Activated B cell treated with CpG ODN at 0.5 μM for 24 hours (primary cell): ENCODE measurements at regions of chr9 and their contacts with region 1.

Region 1: DNA sequence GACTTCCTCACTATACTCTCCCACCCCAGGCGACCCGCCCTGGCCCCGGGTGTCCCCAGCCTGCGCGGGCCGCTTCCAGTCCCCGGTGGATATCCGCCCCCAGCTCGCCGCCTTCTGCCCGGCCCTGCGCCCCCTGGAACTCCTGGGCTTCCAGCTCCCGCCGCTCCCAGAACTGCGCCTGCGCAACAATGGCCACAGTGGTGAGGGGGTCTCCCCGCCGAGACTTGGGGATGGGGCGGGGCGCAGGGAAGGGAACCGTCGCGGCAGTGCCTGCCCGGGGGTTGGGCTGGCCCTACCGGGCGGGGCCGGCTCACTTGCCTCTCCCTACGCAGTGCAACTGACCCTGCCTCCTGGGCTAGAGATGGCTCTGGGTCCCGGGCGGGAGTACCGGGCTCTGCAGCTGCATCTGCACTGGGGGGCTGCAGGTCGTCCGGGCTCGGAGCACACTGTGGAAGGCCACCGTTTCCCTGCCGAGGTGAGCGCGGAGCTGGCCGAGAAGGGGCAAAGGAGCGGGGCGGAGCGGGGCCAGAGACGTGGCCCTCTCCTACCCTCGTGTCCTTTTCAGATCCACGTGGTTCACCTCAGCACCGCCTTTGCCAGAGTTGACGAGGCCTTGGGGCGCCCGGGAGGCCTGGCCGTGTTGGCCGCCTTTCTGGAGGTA is 2.1 kb downstream of the CA9 start:
- DNase-seq: peak; percentile 47
- ATAC-seq: peak; percentile 74
- H3K4me3 Mint-ChIP-seq: peak overlapping the region; percentile 75
- H3K27ac Mint-ChIP-seq: no peak overlapping the region
- H3K4me1 Mint-ChIP-seq: peaks cover 31% of the 10 kb centered on the region
- H3K27me3 Mint-ChIP-seq: peaks cover 8% of the 10 kb centered on the region
- CTCF ChIP-seq: no peak

Region 2: DNA sequence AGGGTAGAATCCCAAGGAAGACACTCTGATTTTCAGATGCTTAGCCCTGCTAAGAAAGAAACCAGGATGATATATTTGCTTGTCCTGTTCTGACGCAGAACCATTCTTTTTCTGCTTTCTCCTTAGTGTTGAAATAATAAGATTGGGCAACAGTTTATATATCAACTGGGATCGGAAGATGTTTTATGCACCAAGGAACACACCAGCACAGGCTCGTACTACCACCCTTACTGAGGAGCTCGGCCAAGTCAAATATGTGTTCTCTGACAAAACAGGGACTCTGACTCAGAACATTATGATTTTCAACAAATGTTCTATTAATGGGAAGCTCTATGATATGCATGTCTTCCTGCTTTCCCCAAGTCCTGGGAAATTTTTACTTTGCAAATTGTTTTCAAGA is 205.0 kb before region 1 on chr9:
- CTCF ChIA-PET with region 1: no interaction called
- POLR2A ChIA-PET with region 1: no interaction called
- intact Hi-C with region 1: no loop called
- DNase-seq: no peak
- ATAC-seq: no peak
- H3K4me3 Mint-ChIP-seq: no peak overlapping the region
- H3K27ac Mint-ChIP-seq: no peak overlapping the region
- H3K4me1 Mint-ChIP-seq: no peaks in the 10 kb centered on the region
- H3K27me3 Mint-ChIP-seq: peaks cover 22% of the 10 kb centered on the region
- CTCF ChIP-seq: no peak

Region 3: DNA sequence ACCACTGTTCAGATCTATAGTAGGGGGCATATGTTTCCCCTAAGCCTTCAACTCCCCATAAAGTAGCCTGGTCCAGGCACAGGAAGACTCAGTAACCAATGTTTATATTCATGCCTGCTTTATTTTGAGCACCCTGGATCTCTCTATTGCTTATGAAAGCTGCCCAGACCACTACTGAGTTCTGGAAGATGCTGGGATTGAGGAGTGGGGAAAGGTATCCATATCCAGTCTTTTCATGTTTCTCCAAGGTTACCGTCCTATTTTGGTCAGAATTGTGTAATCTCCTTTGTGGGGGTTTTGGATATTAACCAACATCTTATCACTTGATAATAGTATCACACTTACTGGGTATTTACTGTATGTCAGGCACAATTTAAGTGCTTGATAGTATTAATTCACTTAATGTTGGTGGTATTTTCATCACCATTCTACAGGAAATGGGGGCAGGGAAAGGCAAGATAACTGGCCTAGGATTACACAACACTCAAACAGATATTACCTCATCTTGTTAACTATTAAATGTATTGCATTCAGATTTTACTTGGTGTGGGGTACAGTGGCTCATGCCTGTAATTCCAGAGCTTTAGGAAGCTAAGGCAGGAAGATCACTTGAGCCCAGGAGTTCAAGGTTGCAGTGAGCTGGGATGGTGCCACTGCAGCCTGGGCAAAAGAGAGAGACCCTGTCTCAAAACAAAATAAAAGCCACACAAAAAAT is 149.6 kb before region 1 on chr9:
- CTCF ChIA-PET with region 1: no interaction called
- POLR2A ChIA-PET with region 1: no interaction called
- intact Hi-C with region 1: no loop called
- DNase-seq: no peak
- ATAC-seq: no peak
- H3K4me3 Mint-ChIP-seq: no peak overlapping the region
- H3K27ac Mint-ChIP-seq: no peak overlapping the region
- H3K4me1 Mint-ChIP-seq: peaks cover 17% of the 10 kb centered on the region
- H3K27me3 Mint-ChIP-seq: no peaks in the 10 kb centered on the region
- CTCF ChIP-seq: no peak

Region 4: GRCh38 chr9:35716230-35716629 is 40.4 kb after region 1 on chr9:
- CTCF ChIA-PET with region 1: no interaction called
- POLR2A ChIA-PET with region 1: no interaction called
- intact Hi-C with region 1: loop called (anchors 5 kb)
- DNase-seq: no peak
- ATAC-seq: no peak
- H3K4me3 Mint-ChIP-seq: no peak overlapping the region
- H3K27ac Mint-ChIP-seq: no peak overlapping the region
- H3K4me1 Mint-ChIP-seq: peaks cover 26% of the 10 kb centered on the region
- H3K27me3 Mint-ChIP-seq: no peaks in the 10 kb centered on the region
- CTCF ChIP-seq: no peak

Region 5: GRCh38 chr9:35745569-35745968 is 69.7 kb after region 1 on chr9:
- CTCF ChIA-PET with region 1: no interaction called
- POLR2A ChIA-PET with region 1: no interaction called
- intact Hi-C with region 1: no loop called
- DNase-seq: no peak
- ATAC-seq: no peak
- H3K4me3 Mint-ChIP-seq: no peak overlapping the region
- H3K27ac Mint-ChIP-seq: no peak overlapping the region
- H3K4me1 Mint-ChIP-seq: peaks cover 45% of the 10 kb centered on the region
- H3K27me3 Mint-ChIP-seq: no peaks in the 10 kb centered on the region
- CTCF ChIP-seq: no peak

Region 6: GRCh38 chr9:35756275-35757225 is 80.7 kb after region 1 on chr9:
- CTCF ChIA-PET with region 1: interaction called, 3 read pairs
- POLR2A ChIA-PET with region 1: interaction called, 10 read pairs
- intact Hi-C with region 1: no loop called
- DNase-seq: peak; percentile 68
- ATAC-seq: peak; percentile 73
- H3K4me3 Mint-ChIP-seq: peak overlapping the region; percentile 91
- H3K27ac Mint-ChIP-seq: peak overlapping the region; percentile 93
- H3K4me1 Mint-ChIP-seq: peaks cover 55% of the 10 kb centered on the region
- H3K27me3 Mint-ChIP-seq: no peaks in the 10 kb centered on the region
- CTCF ChIP-seq: no peak